ENCODE measurements at regions of chr5 and their contacts with region 1.

Region 1: DNA sequence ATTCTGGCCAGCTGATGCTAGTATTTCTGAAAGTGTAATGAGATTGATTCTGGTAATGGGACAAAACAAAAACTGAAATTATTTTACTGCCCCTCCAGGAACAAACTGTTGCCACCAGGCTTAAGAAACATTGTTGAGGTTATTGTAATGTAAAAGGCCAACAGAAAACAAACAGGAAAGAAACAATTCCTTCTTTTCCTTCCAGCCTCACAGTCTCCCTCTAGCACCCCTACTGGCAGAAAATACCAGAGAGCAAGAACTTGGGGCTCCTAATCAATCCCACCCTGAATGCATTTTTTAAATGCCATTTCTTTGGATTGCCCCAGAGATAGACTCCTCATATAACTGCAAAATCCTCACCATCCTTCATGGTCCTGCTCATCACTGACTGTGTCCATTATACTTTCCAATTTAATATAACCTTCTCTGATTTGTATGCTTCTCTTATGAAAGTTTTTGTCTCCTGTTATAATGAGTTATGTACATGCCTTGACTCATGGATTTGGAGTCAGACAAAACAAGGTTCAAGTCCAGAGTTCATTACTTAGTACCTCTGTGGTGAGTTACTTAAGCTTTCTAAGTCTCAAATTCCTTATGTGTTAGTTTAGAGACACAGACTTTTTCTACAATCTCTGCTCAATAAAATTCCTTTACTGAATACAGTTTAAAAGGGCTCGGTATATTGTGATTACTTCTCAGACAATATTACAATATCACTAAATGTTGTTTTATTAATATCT is 157.9 kb upstream of the FBN2 start:
- DNase-seq: no peak
- H3K4me3 ChIP-seq: no peak overlapping the region
- H3K27ac ChIP-seq: no peak overlapping the region
- H3K4me1 ChIP-seq: peaks cover 0 to 14% (median 3%) of the 10 kb centered on the region in 4 experiments; a peak in 5 of 7 replicates
- H3K27me3 ChIP-seq: no peaks in the 10 kb centered on the region
- CTCF ChIP-seq: peak in 2 of 3 experiments; percentile 58 to 75; a peak in 3 of 4 replicates
- EP300 ChIP-seq: no peak
- POLR2A ChIP-seq: no peak
- RAD21 ChIP-seq: peak; percentile 51 to 54

Region 2: DNA sequence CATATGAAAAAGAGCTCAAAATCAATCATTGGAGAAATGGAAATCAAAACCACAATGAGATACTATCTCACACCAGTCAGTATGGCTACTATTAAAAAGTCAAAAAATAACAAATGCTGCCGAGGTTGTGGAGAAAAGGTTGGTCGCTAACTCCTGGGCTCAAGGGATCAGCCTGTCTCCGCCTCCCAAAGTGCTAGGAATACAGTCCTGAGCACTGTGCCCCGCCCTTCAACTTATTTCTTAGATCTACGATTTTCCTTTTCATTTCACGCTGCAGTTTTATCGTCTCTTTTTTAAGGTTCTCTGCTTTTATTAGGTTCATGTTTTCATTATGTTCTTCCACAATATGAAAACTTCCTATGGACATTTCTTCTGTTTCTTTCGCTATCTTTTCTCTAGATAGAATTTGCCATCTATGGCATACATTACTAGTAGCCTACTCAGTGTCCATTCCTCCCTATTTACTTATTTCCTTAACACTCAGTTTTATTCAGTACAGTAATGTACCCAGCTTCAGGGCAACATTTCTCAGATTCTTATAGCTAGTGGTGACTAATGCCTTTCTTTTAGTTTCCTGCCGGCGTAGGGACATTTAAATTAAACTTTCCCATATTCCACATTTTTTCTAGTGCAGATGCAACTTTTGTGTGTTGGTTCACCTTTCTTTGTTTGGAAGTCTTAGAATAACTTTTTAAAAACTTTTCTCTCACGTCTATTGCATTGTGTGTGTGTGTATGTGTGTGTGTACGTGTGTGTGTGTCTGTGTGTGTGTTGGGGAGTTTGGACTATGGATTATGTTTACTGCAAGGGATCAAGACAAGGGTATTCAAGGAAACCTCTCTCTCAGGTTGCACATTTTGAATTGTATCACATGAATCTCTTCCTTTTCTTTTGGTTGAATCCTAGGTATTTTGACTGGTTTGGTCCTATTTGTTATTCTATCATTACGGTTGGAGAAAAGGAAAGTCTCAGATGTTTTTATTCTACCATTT is 136.4 kb before region 1 on chr5:
- CTCF ChIA-PET with region 1: no interaction called
- POLR2A ChIA-PET with region 1: no interaction called
- DNase-seq: no peak
- H3K4me3 ChIP-seq: no peak overlapping the region
- H3K27ac ChIP-seq: no peak overlapping the region
- H3K4me1 ChIP-seq: no peaks in the 10 kb centered on the region
- H3K27me3 ChIP-seq: no peaks in the 10 kb centered on the region
- CTCF ChIP-seq: no peak
- EP300 ChIP-seq: no peak
- POLR2A ChIP-seq: no peak
- RAD21 ChIP-seq: no peak

Region 3: GRCh38 chr5:128681764-128682596 is 14.0 kb before region 1 on chr5:
- CTCF ChIA-PET with region 1: interaction called, 26 read pairs
- POLR2A ChIA-PET with region 1: no interaction called
- DNase-seq: no peak
- H3K4me3 ChIP-seq: peak overlapping the region in 1 of 4 experiments; percentile 23; a peak in 2 of 8 replicates
- H3K27ac ChIP-seq: no peak overlapping the region
- H3K4me1 ChIP-seq: peaks cover 3 to 6% (median 6%) of the 10 kb centered on the region in 4 experiments; a peak in 6 of 7 replicates
- H3K27me3 ChIP-seq: no peaks in the 10 kb centered on the region
- CTCF ChIP-seq: no peak
- EP300 ChIP-seq: no peak
- POLR2A ChIP-seq: no peak
- RAD21 ChIP-seq: no peak